Tibial artery (tissue), 4 donors: ENCODE measurements at regions of chrX and their contacts with region 1.

Region 1: DNA sequence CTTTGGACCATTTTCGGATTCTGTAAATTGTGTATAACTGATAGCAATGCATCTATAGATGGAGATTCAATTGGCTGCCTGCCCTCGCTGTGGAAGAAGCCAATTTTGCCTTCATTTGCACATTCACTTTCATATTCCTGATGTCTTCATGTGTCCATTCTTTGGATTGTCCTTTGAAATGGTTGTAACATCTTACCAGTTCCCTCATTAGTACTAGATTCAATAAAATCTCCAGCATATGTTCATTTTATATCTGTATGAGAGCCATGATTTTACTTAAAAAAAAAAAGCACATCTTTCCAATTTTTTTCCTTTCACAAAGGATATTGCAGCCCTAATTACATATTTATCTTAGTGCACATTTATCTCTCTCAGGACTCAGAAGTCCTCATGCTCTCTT is 61.7 kb downstream of the BEND2 start:
- DNase-seq: no peak
- H3K4me3 ChIP-seq: no peak overlapping the region
- H3K27ac ChIP-seq: no peak overlapping the region
- H3K4me1 ChIP-seq: no peaks in the 10 kb centered on the region
- H3K27me3 ChIP-seq: no peaks in the 10 kb centered on the region
- CTCF ChIP-seq: no peak

Region 2: DNA sequence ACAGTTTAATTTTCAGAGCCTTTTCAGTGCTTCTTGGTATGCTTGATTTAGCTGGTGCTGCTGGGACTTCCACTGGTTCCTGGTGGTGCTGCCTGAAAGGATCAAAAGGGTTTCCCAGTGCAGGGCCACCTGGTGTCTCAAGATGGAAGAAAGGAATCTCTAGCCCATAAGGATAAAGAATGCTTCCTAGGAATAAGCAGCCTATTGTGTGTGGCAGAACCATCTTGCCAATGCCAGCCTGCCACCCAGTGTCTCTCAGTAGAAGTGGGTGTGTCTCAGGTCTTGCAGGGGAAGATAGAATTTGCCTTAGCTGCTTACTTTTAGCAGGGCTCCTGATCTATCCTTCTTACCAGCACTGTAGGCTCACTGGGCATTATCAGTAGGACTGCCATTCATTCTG is 282.8 kb before region 1 on chrX:
- intact Hi-C with region 1: loop called (anchors 5 kb)
- DNase-seq: no peak
- H3K4me3 ChIP-seq: no peak overlapping the region
- H3K27ac ChIP-seq: no peak overlapping the region
- H3K4me1 ChIP-seq: no peaks in the 10 kb centered on the region
- H3K27me3 ChIP-seq: no peaks in the 10 kb centered on the region
- CTCF ChIP-seq: no peak